PC-3 (cell line): ENCODE measurements at regions of chr7 and their contacts with region 1.

Region 1: GRCh38 chr7:23389701-23390100 is 80.6 kb downstream of the IGF2BP3 start:
- DNase-seq: no peak
- ATAC-seq: no peak
- H3K4me3 ChIP-seq: no peak overlapping the region
- H3K27ac ChIP-seq: no peak overlapping the region
- H3K4me1 ChIP-seq: no peaks in the 10 kb centered on the region
- H3K27me3 ChIP-seq: no peaks in the 10 kb centered on the region
- CTCF ChIP-seq: no peak

Region 2: DNA sequence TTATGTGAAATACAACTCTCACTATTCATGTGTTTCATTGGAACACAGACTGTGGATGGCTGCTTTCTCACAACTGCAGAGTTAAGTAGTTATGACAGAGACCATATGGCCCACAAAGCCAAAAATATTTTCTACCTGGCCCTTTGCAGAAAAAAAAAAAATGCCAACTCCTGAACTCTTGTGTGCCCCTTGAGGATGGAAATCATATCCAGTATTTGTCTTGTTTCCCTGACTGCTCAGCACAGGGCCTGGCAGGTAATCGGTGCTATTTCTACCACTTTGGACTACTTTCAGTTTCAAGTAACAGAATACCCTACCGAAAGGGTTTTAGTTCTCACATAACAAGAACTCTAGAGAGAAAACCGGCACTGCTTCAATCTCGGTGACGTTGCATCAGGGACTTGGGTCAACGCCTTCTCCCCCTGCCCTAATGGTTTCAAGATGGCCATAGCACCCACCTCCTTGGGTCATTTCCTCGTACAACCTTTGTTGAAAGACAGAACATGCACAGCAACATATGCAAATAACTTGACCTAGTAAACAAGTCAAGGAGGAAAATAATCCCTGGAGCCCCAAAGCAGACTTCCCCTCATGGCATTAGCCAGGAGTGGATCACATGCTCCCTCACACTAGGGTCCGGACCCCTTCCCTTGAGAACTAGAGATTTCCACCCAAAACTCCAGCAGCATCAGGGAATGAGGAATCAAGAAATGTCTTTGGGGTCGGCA is 155.0 kb before region 1 on chr7:
- CTCF ChIA-PET with region 1: interaction called, 12 read pairs
- POLR2A ChIA-PET with region 1: no interaction called
- intact Hi-C with region 1: no loop called
- DNase-seq: no peak
- ATAC-seq: no peak
- H3K4me3 ChIP-seq: no peak overlapping the region
- H3K27ac ChIP-seq: no peak overlapping the region
- H3K4me1 ChIP-seq: peaks cover 11% of the 10 kb centered on the region; the same call in 1 of the 2 replicates
- H3K27me3 ChIP-seq: no peaks in the 10 kb centered on the region
- CTCF ChIP-seq: no peak

Region 3: DNA sequence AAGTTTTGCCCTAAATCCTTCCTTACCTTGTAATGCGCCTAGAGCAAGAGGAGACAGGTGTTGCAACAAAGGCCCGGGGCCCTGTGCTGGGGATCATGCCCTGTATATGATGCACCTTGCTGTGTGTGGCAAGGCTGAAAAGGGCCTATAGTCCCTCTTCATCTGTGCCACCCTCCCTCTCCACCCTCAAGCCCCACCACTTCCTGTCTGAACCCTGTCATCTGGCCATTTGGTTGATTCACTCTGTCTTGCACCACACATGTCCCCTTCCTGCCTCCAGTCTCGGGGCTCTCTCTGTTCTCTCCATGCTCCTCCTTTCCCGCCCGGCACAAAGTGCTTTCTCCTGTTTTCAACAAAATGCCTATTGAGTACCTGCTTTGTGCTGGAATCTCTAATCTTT is 102.1 kb before region 1 on chr7:
- CTCF ChIA-PET with region 1: no interaction called
- POLR2A ChIA-PET with region 1: no interaction called
- intact Hi-C with region 1: no loop called
- DNase-seq: no peak
- ATAC-seq: no peak
- H3K4me3 ChIP-seq: no peak overlapping the region
- H3K27ac ChIP-seq: no peak overlapping the region
- H3K4me1 ChIP-seq: no peaks in the 10 kb centered on the region
- H3K27me3 ChIP-seq: no peaks in the 10 kb centered on the region
- CTCF ChIP-seq: no peak

Region 4: DNA sequence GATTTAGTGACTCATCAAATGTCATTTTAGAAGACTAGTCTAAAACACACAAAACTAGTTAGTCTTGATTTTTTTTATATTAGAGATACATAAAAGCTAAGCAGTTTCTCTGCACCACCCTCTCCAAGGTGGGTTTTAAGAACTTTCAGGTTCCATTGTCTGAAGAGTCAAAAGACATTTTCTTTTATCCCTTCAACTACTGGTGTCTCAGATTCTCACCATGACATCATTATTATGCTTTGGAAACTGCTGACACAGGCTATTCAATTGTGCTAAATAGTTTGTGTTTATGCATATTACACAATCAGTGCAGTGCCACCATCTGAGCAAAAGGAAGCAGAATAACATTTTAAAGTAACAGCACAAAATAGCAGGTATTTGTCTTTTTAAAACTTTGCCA is 28.3 kb after region 1 on chr7:
- CTCF ChIA-PET with region 1: no interaction called
- POLR2A ChIA-PET with region 1: no interaction called
- intact Hi-C with region 1: no loop called
- DNase-seq: peak; percentile 79
- ATAC-seq: peak; percentile 75
- H3K4me3 ChIP-seq: peak overlapping the region; percentile 36
- H3K27ac ChIP-seq: peak overlapping the region; percentile 64
- H3K4me1 ChIP-seq: peaks cover 25% of the 10 kb centered on the region
- H3K27me3 ChIP-seq: no peaks in the 10 kb centered on the region
- CTCF ChIP-seq: 0 out of 2 replicates have a peak, but pooled peaks have one; percentile 16

Region 5: GRCh38 chr7:23586159-23586558 is 196.5 kb after region 1 on chr7:
- CTCF ChIA-PET with region 1: no interaction called
- POLR2A ChIA-PET with region 1: no interaction called
- intact Hi-C with region 1: no loop called
- DNase-seq: no peak
- ATAC-seq: no peak
- H3K4me3 ChIP-seq: no peak overlapping the region
- H3K27ac ChIP-seq: no peak overlapping the region
- H3K4me1 ChIP-seq: no peaks in the 10 kb centered on the region
- H3K27me3 ChIP-seq: no peaks in the 10 kb centered on the region
- CTCF ChIP-seq: no peak

Region 6: DNA sequence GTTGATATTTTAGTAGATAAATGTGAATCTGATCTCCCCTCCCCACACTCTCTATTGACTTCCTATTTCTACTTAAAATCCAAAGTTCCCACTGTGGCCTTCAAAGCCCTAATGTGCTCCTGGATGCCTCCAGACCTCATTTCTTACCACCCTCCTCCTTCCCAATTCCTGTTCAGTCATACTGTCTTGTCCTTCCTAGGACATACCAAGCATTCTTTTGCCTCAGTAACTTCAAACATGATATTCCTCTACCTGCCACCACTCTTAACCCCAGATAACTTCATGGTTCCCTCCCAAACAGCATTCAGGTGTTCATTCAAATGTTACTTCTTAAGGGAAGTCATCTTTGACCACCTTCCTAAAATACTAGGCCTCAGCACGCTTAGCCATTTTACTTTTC is 256.1 kb after region 1 on chr7:
- CTCF ChIA-PET with region 1: no interaction called
- POLR2A ChIA-PET with region 1: no interaction called
- intact Hi-C with region 1: no loop called
- DNase-seq: no peak
- ATAC-seq: no peak
- H3K4me3 ChIP-seq: no peak overlapping the region
- H3K27ac ChIP-seq: no peak overlapping the region
- H3K4me1 ChIP-seq: no peaks in the 10 kb centered on the region
- H3K27me3 ChIP-seq: no peaks in the 10 kb centered on the region
- CTCF ChIP-seq: no peak